ENCODE measurements at regions of chr13 and their contacts with region 1.

Region 1: GRCh38 chr13:33817901-33818706 is at the start of gene RFC3:
- DNase-seq: peak; percentile 94 to 96
- H3K4me3 ChIP-seq: peak within 1 kb of the TSS; percentile 83
- H3K4me3 Mint-ChIP-seq: peak within 1 kb of the TSS; percentile 82
- H3K27ac Mint-ChIP-seq: peak within 1 kb of the TSS; percentile 91
- H3K4me1 ChIP-seq: peaks cover 4% of the 10 kb centered on the region; the same call in 1 of the 2 replicates
- H3K4me1 Mint-ChIP-seq: no peaks in the 10 kb centered on the region
- H3K27me3 ChIP-seq: no peaks in the 10 kb centered on the region
- H3K27me3 Mint-ChIP-seq: no peaks in the 10 kb centered on the region
- CTCF ChIP-seq: peak in 1 of 2 experiments; percentile 2
- total RNA-seq, gene RFC3: 46.4 and 50.2 TPM in 2 replicates

Region 2: DNA sequence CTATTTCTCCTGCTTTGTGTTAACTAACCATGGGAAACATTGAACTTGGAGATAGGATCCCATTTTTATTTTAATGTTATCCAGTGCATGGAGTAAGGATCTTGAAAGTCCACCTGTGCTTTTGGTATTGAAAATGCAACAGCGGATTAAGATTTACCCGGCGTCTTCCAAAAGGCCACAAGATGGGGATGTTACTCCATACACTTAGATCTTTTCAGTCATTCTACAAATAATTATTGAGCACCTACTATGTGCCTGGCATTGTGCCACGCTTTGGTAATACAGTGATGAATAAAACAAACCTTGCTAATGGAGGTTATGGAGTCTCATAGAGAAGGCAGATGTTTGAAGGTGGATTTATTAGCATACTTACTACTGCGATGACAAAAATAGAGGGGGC is 56.8 kb after region 1 on chr13:
- CTCF ChIA-PET with region 1: no interaction called
- POLR2A ChIA-PET with region 1: no interaction called
- intact Hi-C with region 1: loop called (anchors 2 kb)
- DNase-seq: no peak
- H3K4me3 ChIP-seq: no peak overlapping the region
- H3K4me3 Mint-ChIP-seq: no peak overlapping the region
- H3K27ac Mint-ChIP-seq: no peak overlapping the region
- H3K4me1 ChIP-seq: peaks cover 19% of the 10 kb centered on the region
- H3K4me1 Mint-ChIP-seq: peaks cover 13% of the 10 kb centered on the region
- H3K27me3 ChIP-seq: no peaks in the 10 kb centered on the region
- H3K27me3 Mint-ChIP-seq: no peaks in the 10 kb centered on the region
- CTCF ChIP-seq: no peak

Region 3: DNA sequence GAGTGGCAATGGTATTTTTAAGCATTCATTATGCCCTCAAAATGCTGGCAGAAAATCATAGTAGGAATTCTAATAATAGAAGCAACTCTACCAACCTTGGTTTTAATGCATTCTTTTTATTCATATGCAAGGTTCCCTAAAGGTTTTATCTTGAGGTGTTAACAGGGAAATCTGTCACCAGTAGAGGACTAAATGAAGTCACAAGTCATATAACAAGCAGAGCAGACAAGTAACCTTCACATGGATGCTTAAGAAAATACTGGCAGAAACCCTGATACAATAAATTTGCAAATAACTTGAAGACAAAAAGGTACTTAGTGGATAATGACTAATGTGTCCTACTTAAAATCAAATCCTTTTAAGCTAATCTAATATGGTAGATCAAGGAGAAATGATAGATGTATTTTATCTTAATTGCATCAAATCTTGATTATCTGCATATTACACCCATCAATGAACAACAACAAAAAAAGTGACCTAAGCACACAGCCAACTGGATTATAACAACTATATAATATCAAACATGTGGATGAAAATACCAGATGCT is 73.2 kb after region 1 on chr13:
- CTCF ChIA-PET with region 1: no interaction called
- POLR2A ChIA-PET with region 1: no interaction called
- intact Hi-C with region 1: no loop called
- DNase-seq: no peak
- H3K4me3 ChIP-seq: no peak overlapping the region
- H3K4me3 Mint-ChIP-seq: no peak overlapping the region
- H3K27ac Mint-ChIP-seq: no peak overlapping the region
- H3K4me1 ChIP-seq: no peaks in the 10 kb centered on the region
- H3K4me1 Mint-ChIP-seq: no peaks in the 10 kb centered on the region
- H3K27me3 ChIP-seq: no peaks in the 10 kb centered on the region
- H3K27me3 Mint-ChIP-seq: no peaks in the 10 kb centered on the region
- CTCF ChIP-seq: no peak

Region 4: DNA sequence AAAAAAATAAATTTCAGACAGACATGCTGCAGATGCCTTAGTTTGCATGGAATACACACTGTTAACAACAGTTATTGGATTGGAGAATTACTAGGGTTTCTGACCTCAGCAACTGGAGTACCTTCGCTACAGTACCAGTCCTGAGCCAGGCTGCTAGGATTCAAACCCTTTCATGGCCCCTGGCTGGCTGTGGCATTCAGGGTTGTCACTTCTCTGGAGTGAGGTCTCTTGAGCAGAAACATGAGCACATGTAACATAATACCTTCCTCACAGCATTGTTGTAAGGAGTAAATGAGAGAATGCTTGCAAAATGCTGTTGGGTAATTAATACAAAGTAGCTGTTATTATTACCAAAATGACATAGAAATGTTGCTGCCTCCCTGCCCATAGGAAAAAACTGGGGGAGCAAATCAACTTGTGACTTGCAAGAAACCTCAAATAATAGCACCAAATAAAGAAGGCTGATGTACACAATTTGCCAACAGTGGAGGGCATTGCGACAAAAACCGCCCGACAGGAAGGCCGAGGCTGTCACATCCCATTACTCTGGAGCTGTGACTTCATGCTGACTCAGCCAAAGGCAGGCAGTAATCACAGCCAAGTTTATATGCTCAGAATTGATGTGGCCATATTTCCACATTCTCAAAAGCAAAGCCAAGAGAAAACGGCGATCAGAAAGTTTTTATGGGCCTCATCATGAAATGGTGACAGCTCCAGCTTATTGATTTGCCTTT is 100.3 kb after region 1 on chr13:
- CTCF ChIA-PET with region 1: no interaction called
- POLR2A ChIA-PET with region 1: no interaction called
- intact Hi-C with region 1: no loop called
- DNase-seq: no peak
- H3K4me3 ChIP-seq: no peak overlapping the region
- H3K4me3 Mint-ChIP-seq: no peak overlapping the region
- H3K27ac Mint-ChIP-seq: no peak overlapping the region
- H3K4me1 ChIP-seq: no peaks in the 10 kb centered on the region
- H3K4me1 Mint-ChIP-seq: no peaks in the 10 kb centered on the region
- H3K27me3 ChIP-seq: no peaks in the 10 kb centered on the region
- H3K27me3 Mint-ChIP-seq: no peaks in the 10 kb centered on the region
- CTCF ChIP-seq: no peak

Measured in Caco-2 (cell line).